ENCODE measurements at regions of chr1 and their contacts with region 1.

Region 1: GRCh38 chr1:11198257-11198656 is 9.1 kb downstream of the ANGPTL7 start:
- DNase-seq: no peak
- ATAC-seq: no peak
- H3K4me3 ChIP-seq: no peak overlapping the region
- H3K4me3 Mint-ChIP-seq: no peak overlapping the region
- H3K27ac ChIP-seq: no peak overlapping the region
- H3K27ac Mint-ChIP-seq: no peak overlapping the region
- H3K4me1 ChIP-seq: no peaks in the 10 kb centered on the region
- H3K4me1 Mint-ChIP-seq: no peaks in the 10 kb centered on the region
- H3K27me3 ChIP-seq: no peaks in the 10 kb centered on the region
- H3K27me3 Mint-ChIP-seq: no peaks in the 10 kb centered on the region
- CTCF ChIP-seq: no peak

Region 2: DNA sequence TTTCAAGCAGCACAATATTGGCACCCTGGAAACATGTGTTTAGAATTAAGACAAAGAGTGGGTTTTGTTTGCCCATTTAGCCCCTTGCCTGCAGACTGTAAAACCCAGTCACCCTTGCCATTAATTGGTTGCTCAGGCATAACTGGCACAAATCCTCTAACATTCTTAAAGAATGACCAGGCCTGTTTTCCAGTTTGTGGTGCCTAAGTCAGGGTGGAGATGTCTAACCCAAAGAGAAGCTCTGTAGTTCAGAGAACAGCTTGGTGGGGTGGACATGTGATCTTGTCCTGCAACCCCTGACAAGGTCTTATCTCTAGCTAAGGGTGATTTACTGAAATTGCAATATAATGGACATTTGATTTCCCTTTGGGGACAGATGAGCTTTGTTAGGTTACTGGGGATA is 17.9 kb before region 1 on chr1:
- CTCF ChIA-PET with region 1: no interaction called
- POLR2A ChIA-PET with region 1: interaction called, 14 read pairs
- intact Hi-C with region 1: no loop called
- DNase-seq: no peak
- ATAC-seq: no peak
- H3K4me3 ChIP-seq: no peak overlapping the region
- H3K4me3 Mint-ChIP-seq: no peak overlapping the region
- H3K27ac ChIP-seq: no peak overlapping the region
- H3K27ac Mint-ChIP-seq: no peak overlapping the region
- H3K4me1 ChIP-seq: no peaks in the 10 kb centered on the region
- H3K4me1 Mint-ChIP-seq: no peaks in the 10 kb centered on the region
- H3K27me3 ChIP-seq: no peaks in the 10 kb centered on the region
- H3K27me3 Mint-ChIP-seq: no peaks in the 10 kb centered on the region
- CTCF ChIP-seq: no peak